ENCODE measurements at regions of chrX and their contacts with region 1.

Region 1: DNA sequence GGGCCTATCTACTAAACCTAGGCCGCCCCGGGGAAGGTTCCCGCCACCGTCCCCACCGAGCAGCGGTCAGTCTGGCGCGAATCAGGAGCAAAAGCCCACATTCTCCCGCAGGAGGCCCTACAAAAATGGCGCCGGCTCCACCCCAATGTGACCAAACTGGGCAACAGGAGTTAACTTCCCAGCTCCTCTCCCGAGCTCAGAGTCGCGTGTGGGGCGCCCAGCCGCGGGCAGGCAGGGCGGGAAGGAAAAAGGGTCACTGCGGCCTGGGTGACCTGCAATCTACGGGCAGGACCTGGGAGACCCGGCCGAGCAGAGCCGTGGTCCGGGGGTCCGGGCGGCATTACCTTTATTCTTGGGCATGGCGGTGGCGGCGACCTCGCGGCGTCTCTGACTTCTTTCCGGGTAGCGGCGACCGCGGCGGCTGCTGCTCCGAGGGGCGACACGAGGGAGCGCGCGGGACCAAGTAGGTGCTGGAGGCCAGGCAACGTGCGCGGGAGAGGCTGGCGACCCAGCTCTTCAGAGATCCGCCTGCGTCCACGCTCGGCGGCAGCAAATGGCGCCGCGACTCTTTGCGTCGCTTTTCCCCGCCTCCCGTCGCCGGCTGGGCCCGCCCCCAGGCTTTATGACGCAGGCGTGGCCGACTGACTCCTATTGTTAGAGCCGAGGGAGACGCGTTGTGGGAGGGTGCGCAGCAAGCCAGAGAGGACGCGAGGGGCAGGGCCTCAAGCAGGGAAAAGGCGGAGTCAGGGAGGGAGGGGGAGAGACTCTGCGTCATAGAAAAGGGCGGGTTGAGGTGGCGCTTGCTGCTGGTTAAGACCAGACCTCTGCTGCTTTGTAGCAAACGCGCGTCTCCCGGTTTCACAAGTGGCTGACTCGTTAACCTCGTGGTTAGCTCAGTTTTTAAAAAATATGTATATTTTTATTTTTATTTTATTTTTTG is at the start of gene EIF1AX:
- DNase-seq: peak; percentile 99 to 100
- H3K4me3 ChIP-seq: peak within 1 kb of the TSS; percentile 92 to 98
- H3K27ac ChIP-seq: peak within 1 kb of the TSS; percentile 92 to 95
- H3K4me1 ChIP-seq: peaks cover 0 to 11% of the 10 kb centered on the region in 2 donors
- H3K27me3 ChIP-seq: no peaks in the 10 kb centered on the region
- CTCF ChIP-seq: peak in 1 of 3 experiments; percentile 9
- total RNA-seq, gene EIF1AX: 29.3 TPM

Region 2: DNA sequence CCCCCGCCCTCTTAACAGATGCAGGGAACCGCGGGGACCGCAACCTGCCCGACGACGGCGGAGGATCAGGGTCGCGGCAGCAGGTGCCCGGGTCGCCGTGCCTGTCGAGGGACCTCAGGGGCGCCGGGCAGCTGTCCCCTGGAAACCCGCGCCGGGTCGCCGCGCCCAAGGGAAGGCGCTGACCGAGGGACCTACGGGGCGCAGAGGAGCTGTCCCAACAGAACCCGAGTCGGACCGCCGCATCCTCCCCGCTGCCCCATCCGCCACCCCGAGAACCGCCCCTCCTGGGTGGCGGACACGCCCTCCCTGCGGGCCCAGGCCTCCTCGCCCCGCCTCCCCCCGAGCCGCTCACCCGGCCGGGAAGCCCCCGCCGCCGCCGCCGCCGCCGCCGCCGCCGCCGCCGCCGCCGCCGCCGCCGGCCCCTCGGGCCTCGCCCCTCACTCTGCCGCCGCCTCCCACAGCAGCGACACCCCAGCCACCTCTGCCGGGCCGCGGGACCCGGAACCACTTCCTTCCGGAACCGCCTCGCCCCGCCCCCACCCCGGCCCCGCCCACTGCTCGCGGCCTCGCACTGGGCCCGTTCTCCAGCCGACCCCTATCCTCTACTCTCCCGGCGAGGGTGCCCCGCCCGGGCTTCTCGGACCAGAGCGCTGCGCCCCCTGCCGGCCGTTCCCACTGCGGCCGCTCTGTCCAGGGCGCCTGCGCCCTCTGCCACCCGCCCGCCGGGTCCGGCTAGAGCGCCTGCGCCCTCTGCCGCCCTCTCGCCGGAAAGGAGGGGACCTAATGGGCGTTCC is 150.8 kb before region 1 on chrX and contains the start of gene BCLAF3:
- intact Hi-C with region 1: loop called (anchors 10 kb)
- DNase-seq: peak; percentile 53 to 92
- H3K4me3 ChIP-seq: peak within 1 kb of the TSS; percentile 61 to 69
- H3K27ac ChIP-seq: peak within 1 kb of the TSS; percentile 46 to 68
- H3K4me1 ChIP-seq: no peaks in the 10 kb centered on the region
- H3K27me3 ChIP-seq: no peaks in the 10 kb centered on the region
- CTCF ChIP-seq: peak; percentile 84 to 86 (median 84)
- total RNA-seq, gene BCLAF3: 5.0 TPM